Activated T-helper 1 cell treated with anti-CD3 and anti-CD28 coated beads, Interleukin-12 subunit alpha, Interleukin-12 subunit beta, Interleukin-2, Interleukin-4 antibody, amounts not matched to agents 30 ng/mL and 10 ng/mL and 1 ng/mL, durations not matched to agents 14 hours and 24 hours and 36 hours (primary cell): ENCODE measurements at regions of chr12 and their contacts with region 1.

Region 1: DNA sequence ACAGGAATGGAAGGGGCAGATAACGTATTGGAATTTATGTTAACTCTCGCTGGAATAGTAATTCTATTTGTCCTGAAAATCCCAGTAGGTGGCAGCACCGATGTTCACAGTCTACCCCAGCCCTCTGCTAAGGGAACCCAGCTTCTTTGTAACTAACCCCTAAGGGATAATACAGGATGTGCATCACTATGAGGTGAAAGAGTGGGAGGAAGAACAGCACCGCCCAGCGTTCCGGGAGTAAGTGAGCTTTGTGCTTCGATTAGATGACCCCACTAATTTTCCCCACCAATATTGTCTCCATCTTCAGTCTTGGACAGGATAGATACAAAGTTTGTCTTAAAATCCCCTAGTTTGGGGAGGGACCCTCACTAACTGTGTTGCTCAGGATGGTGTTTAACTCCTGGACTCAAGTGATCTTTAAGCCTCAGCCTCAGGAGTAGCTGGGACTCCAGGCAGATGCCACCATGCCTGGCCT is 2.7 kb downstream of the SLC2A3 start:
- DNase-seq: peak; percentile 64
- H3K4me3 Mint-ChIP-seq: no peak overlapping the region
- H3K27ac Mint-ChIP-seq: no peak overlapping the region
- H3K4me1 Mint-ChIP-seq: peaks cover 36% of the 10 kb centered on the region
- H3K27me3 Mint-ChIP-seq: no peaks in the 10 kb centered on the region

Region 2: GRCh38 chr12:7859552-7859951 is 73.7 kb before region 1 on chr12:
- intact Hi-C with region 1: loop called (anchors 1 kb)
- DNase-seq: no peak
- H3K4me3 Mint-ChIP-seq: no peak overlapping the region
- H3K27ac Mint-ChIP-seq: no peak overlapping the region
- H3K4me1 Mint-ChIP-seq: peaks cover 21% of the 10 kb centered on the region
- H3K27me3 Mint-ChIP-seq: peaks cover 9% of the 10 kb centered on the region

Region 3: GRCh38 chr12:7899755-7900154 is 33.5 kb before region 1 on chr12:
- intact Hi-C with region 1: no loop called
- DNase-seq: no peak
- H3K4me3 Mint-ChIP-seq: no peak overlapping the region
- H3K27ac Mint-ChIP-seq: no peak overlapping the region
- H3K4me1 Mint-ChIP-seq: no peaks in the 10 kb centered on the region
- H3K27me3 Mint-ChIP-seq: no peaks in the 10 kb centered on the region

Region 4: DNA sequence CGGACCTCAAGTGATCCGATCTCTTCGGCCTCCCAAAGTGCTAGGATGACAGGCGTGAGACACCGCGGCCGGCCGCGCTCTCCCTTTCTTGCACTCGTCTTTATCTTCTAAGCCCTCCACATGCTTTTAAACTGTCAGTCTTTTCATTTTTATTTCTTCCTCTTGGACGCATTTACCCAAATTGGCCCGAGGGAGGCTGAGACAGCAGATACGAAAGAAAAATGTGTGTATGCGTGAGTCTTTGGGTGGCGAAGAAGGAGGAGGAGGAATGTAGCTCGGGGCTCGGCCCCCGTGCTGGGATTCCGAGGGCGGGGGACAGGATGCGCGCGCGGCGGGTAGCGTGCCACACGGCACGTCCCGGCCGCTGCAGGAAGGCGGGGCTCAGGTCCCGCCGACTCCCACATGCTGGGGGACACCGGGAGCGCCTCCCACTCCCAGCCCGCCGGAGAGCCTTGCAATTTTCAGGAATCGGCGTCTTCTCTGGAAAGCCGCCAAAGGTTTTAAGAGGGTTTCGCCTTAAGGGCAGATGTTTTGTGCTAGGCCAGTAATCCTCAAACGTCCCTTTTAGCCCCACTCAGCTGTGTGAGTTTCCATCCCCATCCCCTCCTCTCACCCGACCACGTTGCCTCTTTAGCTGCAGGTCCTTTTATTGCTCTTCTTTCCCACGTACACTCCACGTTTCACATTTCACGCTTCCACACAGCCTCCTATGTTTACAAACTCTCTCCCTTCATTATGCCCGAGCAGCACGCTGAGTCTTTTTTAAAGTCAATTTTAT is 37.4 kb after region 1 on chr12:
- intact Hi-C with region 1: loop called (anchors 1 kb)
- DNase-seq: peak; percentile 85
- H3K4me3 Mint-ChIP-seq: peak overlapping the region; percentile 98
- H3K27ac Mint-ChIP-seq: peak overlapping the region; percentile 100
- H3K4me1 Mint-ChIP-seq: peaks cover 40% of the 10 kb centered on the region
- H3K27me3 Mint-ChIP-seq: no peaks in the 10 kb centered on the region

Region 5: GRCh38 chr12:7995266-7995963 is 62.1 kb after region 1 on chr12:
- intact Hi-C with region 1: loop called (anchors 1 kb)
- DNase-seq: peak; percentile 74
- H3K4me3 Mint-ChIP-seq: no peak overlapping the region
- H3K27ac Mint-ChIP-seq: no peak overlapping the region
- H3K4me1 Mint-ChIP-seq: peaks cover 21% of the 10 kb centered on the region
- H3K27me3 Mint-ChIP-seq: no peaks in the 10 kb centered on the region

Region 6: GRCh38 chr12:8108808-8109398 is 175.6 kb after region 1 on chr12:
- intact Hi-C with region 1: no loop called
- DNase-seq: peak; percentile 55
- H3K4me3 Mint-ChIP-seq: no peak overlapping the region
- H3K27ac Mint-ChIP-seq: no peak overlapping the region
- H3K4me1 Mint-ChIP-seq: no peaks in the 10 kb centered on the region
- H3K27me3 Mint-ChIP-seq: no peaks in the 10 kb centered on the region